ENCODE measurements at regions of chr11 and their contacts with region 1.

Region 1: GRCh38 chr11:33996498-33997454 is 54.8 kb upstream of the CAPRIN1 start:
- DNase-seq: peak; percentile 67 to 92
- H3K4me3 ChIP-seq: no peak overlapping the region
- CTCF ChIP-seq: peak in 1 of 3 donors; percentile 75
- POLR2A ChIP-seq: no peak

Region 2: GRCh38 chr11:34299284-34299979 is 302.7 kb after region 1 on chr11:
- intact Hi-C with region 1: loop called (anchors 10 kb)
- DNase-seq: no peak
- H3K4me3 ChIP-seq: no peak overlapping the region
- CTCF ChIP-seq: no peak
- POLR2A ChIP-seq: no peak

Region 3: GRCh38 chr11:34357701-34358257 is 361.0 kb after region 1 on chr11 and contains the start of gene ABTB2:
- intact Hi-C with region 1: loop called (anchors 5 kb)
- DNase-seq: peak; percentile 97 to 100
- H3K4me3 ChIP-seq: peak within 1 kb of the TSS; percentile 41
- CTCF ChIP-seq: no peak
- POLR2A ChIP-seq: peak in 1 of 2 donors; percentile 54
- total RNA-seq, gene ABTB2: 6.1 to 24.2 (median 11.1) TPM

Region 4: DNA sequence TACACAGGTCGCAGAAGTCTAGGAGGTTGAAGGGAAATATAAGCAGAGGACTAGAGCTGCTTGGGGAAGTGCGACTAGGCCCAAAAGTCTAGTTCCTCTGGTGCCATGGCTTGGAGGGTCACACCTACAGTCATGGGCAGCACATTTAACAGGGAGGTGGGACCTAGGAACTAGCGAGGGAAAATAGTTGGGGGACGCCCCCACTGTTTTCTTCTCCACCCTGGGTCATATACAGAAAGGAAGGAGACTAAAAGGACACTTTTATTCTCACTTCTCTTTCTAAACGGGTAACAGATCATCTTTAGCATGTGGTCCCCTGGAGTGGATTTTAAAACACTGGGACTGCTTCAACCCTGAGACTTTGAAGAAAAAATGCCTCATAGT is 902.8 kb after region 1 on chr11:
- intact Hi-C with region 1: loop called (anchors 10 kb)
- DNase-seq: no peak
- H3K4me3 ChIP-seq: no peak overlapping the region
- CTCF ChIP-seq: no peak
- POLR2A ChIP-seq: no peak

Measured in lower leg skin (tissue), 4 donors.